Activated T-helper 2 cell treated with anti-CD3 and anti-CD28 coated beads, Interferon-gamma antibody, Interleukin-2, Interleukin-4, amounts not matched to agents 10 μg/mL and 5 μg/mL and 100 μg/mL, durations not matched to agents 14 hours and 24 hours and 36 hours (primary cell): ENCODE measurements at regions of chr6 and their contacts with region 1.

Region 1: GRCh38 chr6:155418017-155418761 is 37.5 kb downstream of the NOX3 start:
- DNase-seq: peak; percentile 40
- H3K4me3 Mint-ChIP-seq: peak overlapping the region; percentile 61
- H3K27ac Mint-ChIP-seq: peak overlapping the region; percentile 96
- H3K4me1 Mint-ChIP-seq: peaks cover 45% of the 10 kb centered on the region
- H3K27me3 Mint-ChIP-seq: no peaks in the 10 kb centered on the region

Region 2: GRCh38 chr6:154548130-154548830 is 869.9 kb before region 1 on chr6:
- intact Hi-C with region 1: no loop called
- DNase-seq: no peak
- H3K4me3 Mint-ChIP-seq: no peak overlapping the region
- H3K27ac Mint-ChIP-seq: no peak overlapping the region
- H3K4me1 Mint-ChIP-seq: no peaks in the 10 kb centered on the region
- H3K27me3 Mint-ChIP-seq: peaks cover 2% of the 10 kb centered on the region

Region 3: DNA sequence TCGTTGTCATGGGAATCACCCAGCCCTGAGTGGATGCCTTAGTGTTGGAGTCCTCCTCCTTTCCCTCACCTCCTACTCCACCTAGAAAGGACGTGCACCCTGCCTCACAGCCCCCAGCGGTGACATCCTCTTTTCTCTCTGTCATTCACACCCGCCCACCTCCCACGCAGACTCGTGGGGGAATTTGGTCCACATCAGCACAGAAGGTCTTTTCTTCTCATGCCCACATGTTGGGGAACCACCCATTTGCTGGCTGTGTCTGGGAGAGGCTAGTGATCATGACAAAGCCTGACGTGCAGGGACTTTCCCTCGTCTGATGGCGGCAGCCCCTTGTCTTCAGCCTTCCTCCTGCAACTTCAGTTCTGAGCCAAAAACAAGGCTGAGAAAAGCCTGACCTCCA is 811.7 kb before region 1 on chr6:
- intact Hi-C with region 1: loop called (anchors 5 kb)
- DNase-seq: peak; percentile 26
- H3K4me3 Mint-ChIP-seq: peak overlapping the region; percentile 5
- H3K27ac Mint-ChIP-seq: peak overlapping the region; percentile 71
- H3K4me1 Mint-ChIP-seq: peaks cover 38% of the 10 kb centered on the region
- H3K27me3 Mint-ChIP-seq: peaks cover 10% of the 10 kb centered on the region

Region 4: GRCh38 chr6:155188707-155189496 is 229.3 kb before region 1 on chr6:
- intact Hi-C with region 1: loop called (anchors 1 kb)
- DNase-seq: no peak
- H3K4me3 Mint-ChIP-seq: peak overlapping the region; percentile 26
- H3K27ac Mint-ChIP-seq: peak overlapping the region; percentile 89
- H3K4me1 Mint-ChIP-seq: peaks cover 46% of the 10 kb centered on the region
- H3K27me3 Mint-ChIP-seq: no peaks in the 10 kb centered on the region

Region 5: GRCh38 chr6:155349129-155349528 is 69.1 kb before region 1 on chr6:
- intact Hi-C with region 1: loop called (anchors 5 kb)
- DNase-seq: no peak
- H3K4me3 Mint-ChIP-seq: no peak overlapping the region
- H3K27ac Mint-ChIP-seq: no peak overlapping the region
- H3K4me1 Mint-ChIP-seq: peaks cover 12% of the 10 kb centered on the region
- H3K27me3 Mint-ChIP-seq: no peaks in the 10 kb centered on the region

Region 6: GRCh38 chr6:155436981-155437749 is 19.0 kb after region 1 on chr6:
- intact Hi-C with region 1: no loop called
- DNase-seq: no peak
- H3K4me3 Mint-ChIP-seq: no peak overlapping the region
- H3K27ac Mint-ChIP-seq: no peak overlapping the region
- H3K4me1 Mint-ChIP-seq: peaks cover 5% of the 10 kb centered on the region
- H3K27me3 Mint-ChIP-seq: no peaks in the 10 kb centered on the region

Region 7: GRCh38 chr6:155523821-155524651 is 105.8 kb after region 1 on chr6:
- intact Hi-C with region 1: loop called (anchors 2 kb)
- DNase-seq: no peak
- H3K4me3 Mint-ChIP-seq: no peak overlapping the region
- H3K27ac Mint-ChIP-seq: peak overlapping the region; percentile 45
- H3K4me1 Mint-ChIP-seq: peaks cover 12% of the 10 kb centered on the region
- H3K27me3 Mint-ChIP-seq: no peaks in the 10 kb centered on the region